Naive thymus-derived CD4-positive, alpha-beta T cell (primary cell): ENCODE measurements at regions of chr6 and their contacts with region 1.

Region 1: GRCh38 chr6:14210663-14211561 is 93.3 kb downstream of the CD83 start:
- DNase-seq: peak; percentile 79 to 98 (median 87)
- ATAC-seq: peak; percentile 95
- H3K4me3 ChIP-seq: peak overlapping the region; percentile 73
- H3K4me3 Mint-ChIP-seq: peak overlapping the region; percentile 81 to 90 (median 87)
- H3K27ac ChIP-seq: peak overlapping the region; percentile 65
- H3K27ac Mint-ChIP-seq: peak overlapping the region; percentile 6 to 93 (median 73)
- H3K4me1 ChIP-seq: peaks cover 8 to 14% of the 10 kb centered on the region in 2 donors
- H3K4me1 Mint-ChIP-seq: peaks cover 0 to 15% (median 11%) of the 10 kb centered on the region in 7 donors
- H3K27me3 ChIP-seq: no peaks in the 10 kb centered on the region
- H3K27me3 Mint-ChIP-seq: no peaks in the 10 kb centered on the region

Region 2: GRCh38 chr6:14066782-14067406 is 144.0 kb before region 1 on chr6:
- CTCF ChIA-PET with region 1: no interaction called
- POLR2A ChIA-PET with region 1: no interaction called
- intact Hi-C with region 1: no loop called
- DNase-seq: peak in 7 of 9 donors; percentile 32 to 56 (median 43)
- ATAC-seq: peak; percentile 90
- H3K4me3 ChIP-seq: no peak overlapping the region
- H3K4me3 Mint-ChIP-seq: no peak overlapping the region
- H3K27ac ChIP-seq: no peak overlapping the region
- H3K27ac Mint-ChIP-seq: peak overlapping the region in 1 of 9 donors; percentile 82
- H3K4me1 ChIP-seq: no peaks in the 10 kb centered on the region
- H3K4me1 Mint-ChIP-seq: peaks cover 0 to 21% (median 0%) of the 10 kb centered on the region in 7 donors
- H3K27me3 ChIP-seq: no peaks in the 10 kb centered on the region
- H3K27me3 Mint-ChIP-seq: peaks cover 0 to 18% (median 14%) of the 10 kb centered on the region in 5 donors

Region 3: DNA sequence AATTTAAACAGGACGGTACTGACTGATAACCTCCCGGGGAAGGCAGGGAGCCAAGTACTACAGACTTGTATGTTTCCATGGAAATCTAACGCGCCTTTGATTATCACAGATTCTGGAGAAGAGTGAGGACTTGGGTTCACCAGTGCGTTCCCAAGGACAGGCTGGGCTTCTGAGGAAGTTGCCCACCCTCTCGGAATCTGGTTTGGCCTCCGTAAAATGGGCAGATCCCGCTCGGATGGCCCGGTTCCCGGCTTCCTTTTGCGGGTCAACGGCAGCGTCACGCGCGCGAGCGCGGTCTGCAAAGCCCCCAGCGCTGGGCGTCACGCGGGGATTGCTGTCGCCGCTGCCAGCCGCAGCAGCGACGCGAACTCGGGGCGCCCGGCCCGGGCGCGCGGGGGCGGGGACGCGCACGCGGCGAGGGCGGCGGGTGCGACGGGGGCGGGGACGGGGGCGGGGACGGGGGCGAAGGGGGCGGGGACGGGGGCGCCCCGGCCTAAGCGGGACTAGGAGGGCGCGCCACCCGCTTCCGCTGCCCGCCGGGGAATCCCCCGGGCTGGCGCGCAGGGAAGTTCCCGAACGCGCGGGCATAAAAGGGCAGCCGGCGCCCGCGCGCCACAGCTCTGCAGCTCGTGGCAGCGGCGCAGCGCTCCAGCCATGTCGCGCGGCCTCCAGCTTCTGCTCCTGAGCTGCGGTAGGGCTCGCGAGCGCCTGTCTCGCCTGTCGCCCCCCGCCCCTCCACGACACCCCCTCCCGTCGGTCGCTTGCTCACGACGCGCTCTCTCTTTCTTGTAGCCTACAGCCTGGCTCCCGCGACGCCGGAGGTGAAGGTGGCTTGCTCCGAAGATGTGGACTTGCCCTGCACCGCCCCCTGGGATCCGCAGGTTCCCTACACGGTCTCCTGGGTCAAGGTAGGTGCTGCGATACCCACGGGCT is 93.5 kb before region 1 on chr6 and contains the start of gene CD83:
- CTCF ChIA-PET with region 1: no interaction called
- POLR2A ChIA-PET with region 1: no interaction called
- intact Hi-C with region 1: loop called in 1 of 2 experiments (anchors 5 kb)
- DNase-seq: peak; percentile 79 to 89 (median 84)
- ATAC-seq: peak; percentile 94
- H3K4me3 ChIP-seq: peak within 1 kb of the TSS; percentile 91
- H3K4me3 Mint-ChIP-seq: peak within 1 kb of the TSS; percentile 87 to 97 (median 93)
- H3K27ac ChIP-seq: peak within 1 kb of the TSS; percentile 87
- H3K27ac Mint-ChIP-seq: peak within 1 kb of the TSS; percentile 91 to 96 (median 94)
- H3K4me1 ChIP-seq: peaks cover 11 to 15% of the 10 kb centered on the region in 2 donors
- H3K4me1 Mint-ChIP-seq: peaks cover 18 to 41% (median 28%) of the 10 kb centered on the region in 7 donors
- H3K27me3 ChIP-seq: no peaks in the 10 kb centered on the region
- H3K27me3 Mint-ChIP-seq: peaks cover 0 to 35% (median 0%) of the 10 kb centered on the region in 5 donors
- total RNA-seq, gene CD83: 5.0 to 113 (median 18.3) TPM

Region 4: GRCh38 chr6:14165091-14165490 is 45.8 kb before region 1 on chr6:
- CTCF ChIA-PET with region 1: no interaction called
- POLR2A ChIA-PET with region 1: no interaction called
- intact Hi-C with region 1: no loop called
- DNase-seq: no peak
- ATAC-seq: no peak
- H3K4me3 ChIP-seq: no peak overlapping the region
- H3K4me3 Mint-ChIP-seq: no peak overlapping the region
- H3K27ac ChIP-seq: no peak overlapping the region
- H3K27ac Mint-ChIP-seq: no peak overlapping the region
- H3K4me1 ChIP-seq: no peaks in the 10 kb centered on the region
- H3K4me1 Mint-ChIP-seq: no peaks in the 10 kb centered on the region
- H3K27me3 ChIP-seq: peaks cover 0 to 4% of the 10 kb centered on the region in 2 donors
- H3K27me3 Mint-ChIP-seq: peaks cover 0 to 21% (median 2%) of the 10 kb centered on the region in 5 donors

Region 5: DNA sequence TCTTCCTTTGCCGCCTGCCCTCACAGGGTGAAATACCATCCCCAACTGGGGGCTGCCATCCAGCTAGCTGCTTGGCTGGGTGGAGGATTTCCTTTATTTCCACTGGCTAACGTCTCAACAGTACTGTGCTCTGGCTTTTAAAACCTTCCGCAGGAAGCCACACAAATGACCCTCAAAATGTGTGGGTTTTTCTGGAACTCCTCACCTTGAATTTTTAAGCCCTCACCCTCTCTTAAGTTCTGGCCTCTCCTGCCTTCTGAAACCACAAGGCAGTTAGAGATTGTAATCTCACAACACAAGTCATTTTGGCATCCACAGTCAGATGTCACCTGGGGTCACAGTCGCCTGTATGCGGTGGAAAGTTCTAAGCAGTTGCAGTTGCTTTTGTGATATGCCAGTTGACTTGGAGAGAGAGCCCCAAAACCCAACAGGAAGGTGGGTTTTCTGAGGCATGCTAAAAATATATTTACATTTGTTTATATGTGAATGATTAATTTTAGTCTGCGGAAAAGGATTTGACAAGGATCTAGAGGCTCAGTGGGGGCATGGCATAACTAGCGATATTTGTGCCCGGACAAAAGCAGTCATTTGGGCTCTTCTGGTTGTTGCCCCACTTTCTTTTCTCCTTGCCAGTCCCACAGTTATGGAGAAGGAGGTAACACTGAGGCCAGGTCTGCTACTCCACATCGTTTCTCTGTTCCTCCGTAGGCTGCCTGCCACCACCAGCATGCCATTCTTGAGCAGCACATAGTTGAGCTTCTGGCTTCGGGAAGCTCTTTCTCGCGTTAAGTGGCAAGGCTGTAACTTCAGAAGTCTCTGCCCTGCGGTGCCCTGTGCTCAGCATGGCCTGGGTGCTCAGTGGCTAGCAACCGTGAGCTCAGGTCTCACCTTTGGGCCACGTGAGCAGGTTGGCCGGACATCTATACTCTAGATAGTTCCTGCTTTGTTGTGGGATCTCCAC is 241.9 kb after region 1 on chr6:
- CTCF ChIA-PET with region 1: no interaction called
- POLR2A ChIA-PET with region 1: no interaction called
- intact Hi-C with region 1: loop called in 1 of 2 experiments (anchors 2 kb)
- DNase-seq: peak in 8 of 9 donors; percentile 22 to 66 (median 50)
- ATAC-seq: peak; percentile 77
- H3K4me3 ChIP-seq: peak overlapping the region; percentile 35
- H3K4me3 Mint-ChIP-seq: peak overlapping the region; percentile 56 to 81 (median 72)
- H3K27ac ChIP-seq: no peak overlapping the region
- H3K27ac Mint-ChIP-seq: peak overlapping the region; percentile 33 to 82 (median 68)
- H3K4me1 ChIP-seq: peaks cover 23 to 41% of the 10 kb centered on the region in 2 donors
- H3K4me1 Mint-ChIP-seq: peaks cover 45 to 73% (median 64%) of the 10 kb centered on the region in 7 donors
- H3K27me3 ChIP-seq: no peaks in the 10 kb centered on the region
- H3K27me3 Mint-ChIP-seq: no peaks in the 10 kb centered on the region

Region 6: DNA sequence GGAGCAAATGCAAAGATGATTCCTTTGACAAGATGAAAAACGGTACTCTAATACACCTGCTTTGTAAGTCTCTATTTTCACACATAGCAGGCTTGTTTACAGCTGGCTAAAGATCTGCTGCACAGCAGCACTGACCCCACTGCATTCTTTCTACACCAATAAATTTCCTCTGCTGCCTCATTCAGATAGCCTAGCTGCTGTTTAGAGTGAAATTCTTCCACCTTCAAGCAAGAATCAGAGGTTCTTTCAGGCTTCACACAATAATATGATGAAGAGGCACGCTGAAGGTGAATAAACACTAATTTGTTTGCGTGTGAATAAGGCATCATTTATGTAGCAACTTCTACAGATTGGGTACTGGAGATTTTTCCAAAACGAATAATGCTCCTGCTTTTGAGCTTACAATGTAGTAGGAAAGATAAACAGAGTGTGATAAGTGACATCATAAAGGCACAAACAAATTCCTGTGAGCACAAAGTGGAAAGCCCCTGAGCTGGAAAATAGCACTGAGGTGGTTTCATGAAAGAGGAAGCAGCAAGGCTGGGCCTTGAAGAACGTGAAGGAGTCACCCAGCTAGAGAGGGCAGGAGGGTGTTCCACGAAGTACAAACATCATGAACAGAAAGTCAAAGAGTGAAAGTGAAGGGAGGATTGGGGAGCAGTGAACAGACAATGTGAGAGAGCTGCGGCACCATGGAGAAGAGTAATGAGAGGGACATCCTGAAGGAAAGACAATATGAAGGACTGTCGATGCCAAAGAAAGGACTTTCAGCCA is 450.1 kb after region 1 on chr6:
- CTCF ChIA-PET with region 1: interaction called, 3 read pairs
- POLR2A ChIA-PET with region 1: no interaction called
- intact Hi-C with region 1: loop called in 1 of 2 experiments (anchors 1 kb)
- DNase-seq: peak in 8 of 9 donors; percentile 41 to 77 (median 58)
- ATAC-seq: peak; percentile 84
- H3K4me3 ChIP-seq: no peak overlapping the region
- H3K4me3 Mint-ChIP-seq: no peak overlapping the region
- H3K27ac ChIP-seq: peak overlapping the region; percentile 58
- H3K27ac Mint-ChIP-seq: no peak overlapping the region
- H3K4me1 ChIP-seq: peaks cover 14 to 56% of the 10 kb centered on the region in 2 donors
- H3K4me1 Mint-ChIP-seq: peaks cover 31 to 48% (median 36%) of the 10 kb centered on the region in 7 donors
- H3K27me3 ChIP-seq: no peaks in the 10 kb centered on the region
- H3K27me3 Mint-ChIP-seq: peaks cover 0 to 18% (median 0%) of the 10 kb centered on the region in 5 donors

Region 7: DNA sequence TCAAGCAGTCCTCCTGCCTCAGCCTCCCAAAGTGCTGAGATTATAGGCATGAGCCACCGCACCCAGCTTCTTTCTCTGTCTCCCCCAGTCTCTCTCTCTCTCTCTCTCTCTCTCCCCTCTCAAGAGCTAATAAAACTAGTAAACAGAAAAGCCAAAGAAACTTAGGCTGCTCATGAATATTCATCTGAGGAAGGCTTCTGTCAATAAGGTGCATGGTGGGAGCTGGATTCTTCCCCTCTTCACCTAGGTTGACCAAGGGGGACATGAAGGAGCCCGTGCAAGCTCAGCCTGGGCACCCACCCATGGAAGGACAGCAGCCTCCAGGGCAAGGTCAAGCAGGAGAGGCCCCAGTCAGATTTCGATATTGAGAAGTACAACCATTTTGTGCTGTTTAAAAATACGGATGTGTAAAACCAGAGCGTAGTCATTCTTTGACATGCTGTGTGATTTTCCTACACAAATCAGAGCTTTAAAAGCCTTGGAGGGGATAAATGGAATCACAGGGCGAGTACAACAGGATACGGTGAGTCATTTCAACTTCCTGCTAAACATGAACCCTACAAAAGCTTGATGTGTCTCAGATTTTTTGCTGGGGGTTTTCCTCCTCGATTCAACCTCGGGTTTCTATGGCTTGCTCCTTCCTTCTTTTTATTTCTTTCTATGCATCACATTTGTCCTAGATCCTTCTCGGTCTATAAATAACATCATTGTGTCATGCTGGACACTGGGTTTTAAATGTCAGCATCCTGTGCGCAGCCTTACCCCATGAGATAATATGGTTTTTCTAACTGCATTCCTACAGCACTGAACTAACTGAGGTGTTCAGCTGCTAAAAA is 666.1 kb after region 1 on chr6:
- CTCF ChIA-PET with region 1: interaction called, 4 read pairs
- POLR2A ChIA-PET with region 1: no interaction called
- intact Hi-C with region 1: loop called in 1 of 2 experiments (anchors 10 kb)
- DNase-seq: peak in 8 of 9 donors; percentile 1 to 65 (median 34)
- ATAC-seq: peak; percentile 88
- H3K4me3 ChIP-seq: peak overlapping the region; percentile 25
- H3K4me3 Mint-ChIP-seq: peak overlapping the region; percentile 52 to 80 (median 66)
- H3K27ac ChIP-seq: peak overlapping the region; percentile 2
- H3K27ac Mint-ChIP-seq: peak overlapping the region; percentile 43 to 92 (median 79)
- H3K4me1 ChIP-seq: peaks cover 15 to 16% of the 10 kb centered on the region in 2 donors
- H3K4me1 Mint-ChIP-seq: peaks cover 26 to 55% (median 35%) of the 10 kb centered on the region in 7 donors
- H3K27me3 ChIP-seq: no peaks in the 10 kb centered on the region
- H3K27me3 Mint-ChIP-seq: no peaks in the 10 kb centered on the region

Region 8: GRCh38 chr6:15464211-15464725 is 1253.4 kb after region 1 on chr6:
- CTCF ChIA-PET with region 1: no interaction called
- POLR2A ChIA-PET with region 1: no interaction called
- intact Hi-C with region 1: loop called in 1 of 2 experiments (anchors 1 kb)
- DNase-seq: peak; percentile 11 to 56 (median 37)
- ATAC-seq: peak; percentile 86
- H3K4me3 ChIP-seq: no peak overlapping the region
- H3K4me3 Mint-ChIP-seq: no peak overlapping the region
- H3K27ac ChIP-seq: no peak overlapping the region
- H3K27ac Mint-ChIP-seq: peak overlapping the region in 2 of 9 donors; percentile 0 to 7
- H3K4me1 ChIP-seq: no peaks in the 10 kb centered on the region
- H3K4me1 Mint-ChIP-seq: peaks cover 33 to 71% (median 56%) of the 10 kb centered on the region in 7 donors
- H3K27me3 ChIP-seq: no peaks in the 10 kb centered on the region
- H3K27me3 Mint-ChIP-seq: no peaks in the 10 kb centered on the region